ENCODE measurements at regions of chr17 and their contacts with region 1.

Region 1: GRCh38 chr17:21295036-21295952 is 10.8 kb downstream of the MAP2K3 start:
- DNase-seq: no peak
- H3K4me3 ChIP-seq: no peak overlapping the region
- H3K27ac ChIP-seq: no peak overlapping the region
- H3K27me3 ChIP-seq: peaks cover 0 to 19% (median 0%) of the 10 kb centered on the region in 45 donors
- CTCF ChIP-seq: no peak

Region 2: GRCh38 chr17:21272881-21273792 is 22.2 kb before region 1 on chr17:
- intact Hi-C with region 1: no loop called
- DNase-seq: no peak
- H3K4me3 ChIP-seq: no peak overlapping the region
- H3K27ac ChIP-seq: no peak overlapping the region
- H3K27me3 ChIP-seq: no peaks in the 10 kb centered on the region
- CTCF ChIP-seq: no peak

Region 3: DNA sequence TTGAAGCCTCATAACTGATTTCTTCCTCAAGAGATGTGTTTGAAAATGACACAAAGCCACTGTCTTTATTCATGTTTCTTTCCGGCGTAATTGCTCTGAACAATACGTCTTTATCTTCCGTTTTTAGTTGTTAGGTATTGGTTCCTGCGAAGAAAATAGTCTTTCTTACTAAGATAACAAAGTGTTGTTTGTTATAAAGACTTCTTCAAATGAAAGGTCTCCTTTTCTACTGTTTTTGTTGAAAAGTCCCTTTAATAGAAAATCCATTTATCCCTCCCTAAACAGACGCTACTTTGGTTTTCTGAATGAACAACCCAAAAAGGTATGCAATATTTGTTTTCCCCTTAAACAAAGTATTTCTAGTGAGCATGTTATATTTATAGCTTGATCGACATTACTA is 866.1 kb after region 1 on chr17:
- intact Hi-C with region 1: loop called in 1 of 2 experiments (anchors 10 kb)
- DNase-seq: no peak
- H3K4me3 ChIP-seq: no peak overlapping the region
- H3K27ac ChIP-seq: no peak overlapping the region
- H3K27me3 ChIP-seq: peaks cover 0 to 32% (median 0%) of the 10 kb centered on the region in 45 donors
- CTCF ChIP-seq: no peak

Measured in dorsolateral prefrontal cortex (tissue), 120 donors.